ENCODE measurements at regions of chr6 and their contacts with region 1.

Region 1: GRCh38 chr6:119259027-119259426 is 90.5 kb downstream of the MAN1A1 start:
- DNase-seq: peak; percentile 55
- ATAC-seq: peak; percentile 37
- H3K4me3 ChIP-seq: peak overlapping the region in 1 of 2 experiments; percentile 4; a peak in 1 of 4 replicates
- H3K27ac ChIP-seq: peak overlapping the region; percentile 55; the same call in 1 of the 2 replicates
- H3K4me1 ChIP-seq: peaks cover 66 to 71% of the 10 kb centered on the region in 2 experiments
- H3K27me3 ChIP-seq: no peaks in the 10 kb centered on the region
- CTCF ChIP-seq: no peak
- POLR2A ChIP-seq: no peak
- RAD21 ChIP-seq: no peak

Region 2: DNA sequence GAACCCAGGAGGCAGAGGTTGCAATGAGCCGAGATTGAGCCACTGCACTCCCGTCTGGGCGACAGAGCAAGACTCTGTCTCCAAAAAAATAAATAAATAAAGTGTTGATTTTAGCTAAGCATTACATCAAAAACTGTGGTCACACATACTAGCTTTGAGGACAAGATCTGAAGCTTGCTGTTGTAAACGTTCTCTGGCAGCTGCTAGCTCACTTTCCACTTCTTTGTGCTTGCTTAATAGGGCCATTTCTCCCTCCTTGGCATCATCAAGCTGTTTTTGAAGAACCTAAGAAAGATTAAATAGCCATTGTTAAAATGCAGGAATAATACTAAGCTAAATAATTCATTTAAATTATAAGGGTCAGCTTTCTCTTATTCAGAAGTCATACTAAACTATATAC is 236.2 kb before region 1 on chr6:
- CTCF ChIA-PET with region 1: no interaction called
- POLR2A ChIA-PET with region 1: no interaction called
- RAD21 ChIA-PET with region 1: no interaction called
- intact Hi-C with region 1: no loop called
- DNase-seq: no peak
- ATAC-seq: no peak
- H3K4me3 ChIP-seq: no peak overlapping the region
- H3K27ac ChIP-seq: no peak overlapping the region
- H3K4me1 ChIP-seq: no peaks in the 10 kb centered on the region
- H3K27me3 ChIP-seq: no peaks in the 10 kb centered on the region
- CTCF ChIP-seq: no peak
- POLR2A ChIP-seq: no peak
- RAD21 ChIP-seq: no peak

Region 3: GRCh38 chr6:119308048-119308570 is 49.1 kb after region 1 on chr6:
- CTCF ChIA-PET with region 1: no interaction called
- POLR2A ChIA-PET with region 1: no interaction called
- RAD21 ChIA-PET with region 1: no interaction called
- intact Hi-C with region 1: loop called (anchors 2 kb)
- DNase-seq: peak; percentile 51
- ATAC-seq: peak; percentile 39; the same call in 1 of the 2 replicates
- H3K4me3 ChIP-seq: no peak overlapping the region
- H3K27ac ChIP-seq: peak overlapping the region; percentile 40; the same call in 1 of the 2 replicates
- H3K4me1 ChIP-seq: peaks cover 53 to 63% of the 10 kb centered on the region in 2 experiments
- H3K27me3 ChIP-seq: no peaks in the 10 kb centered on the region
- CTCF ChIP-seq: no peak
- POLR2A ChIP-seq: no peak
- RAD21 ChIP-seq: no peak

Measured in HCT116 (cell line).